ENCODE measurements at regions of chr11 and their contacts with region 1.

Region 1: DNA sequence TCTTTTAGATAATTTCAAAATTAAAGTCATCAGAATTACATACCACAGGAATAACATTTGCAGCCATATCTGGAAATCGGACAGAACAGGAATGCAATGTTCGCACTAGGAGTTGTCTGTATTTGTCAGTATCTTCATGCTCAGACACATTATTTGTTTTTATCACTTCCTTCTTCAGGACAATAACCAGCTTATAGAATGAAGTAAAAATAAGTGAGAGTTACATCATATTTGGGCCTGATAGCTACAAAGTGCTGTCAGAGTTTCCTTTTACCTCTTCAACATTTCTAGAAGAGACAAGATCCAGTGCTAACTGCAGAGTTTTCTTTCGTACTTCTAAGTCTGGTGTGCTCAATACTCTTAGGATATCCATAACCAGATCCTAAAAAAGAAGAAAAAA is 18.9 kb downstream of the COPB1 start:
- DNase-seq: no peak
- CTCF ChIP-seq: no peak

Region 2: GRCh38 chr11:14413307-14414069 is 67.2 kb before region 1 on chr11:
- CTCF ChIA-PET with region 1: no interaction called
- POLR2A ChIA-PET with region 1: no interaction called
- DNase-seq: no peak
- CTCF ChIP-seq: no peak

Region 3: GRCh38 chr11:14463623-14464022 is 17.1 kb before region 1 on chr11:
- CTCF ChIA-PET with region 1: interaction called, 10 read pairs
- POLR2A ChIA-PET with region 1: no interaction called
- DNase-seq: no peak
- CTCF ChIP-seq: no peak

Measured in GM10248 (cell line).